ENCODE measurements at regions of chr5 and their contacts with region 1.

Region 1: DNA sequence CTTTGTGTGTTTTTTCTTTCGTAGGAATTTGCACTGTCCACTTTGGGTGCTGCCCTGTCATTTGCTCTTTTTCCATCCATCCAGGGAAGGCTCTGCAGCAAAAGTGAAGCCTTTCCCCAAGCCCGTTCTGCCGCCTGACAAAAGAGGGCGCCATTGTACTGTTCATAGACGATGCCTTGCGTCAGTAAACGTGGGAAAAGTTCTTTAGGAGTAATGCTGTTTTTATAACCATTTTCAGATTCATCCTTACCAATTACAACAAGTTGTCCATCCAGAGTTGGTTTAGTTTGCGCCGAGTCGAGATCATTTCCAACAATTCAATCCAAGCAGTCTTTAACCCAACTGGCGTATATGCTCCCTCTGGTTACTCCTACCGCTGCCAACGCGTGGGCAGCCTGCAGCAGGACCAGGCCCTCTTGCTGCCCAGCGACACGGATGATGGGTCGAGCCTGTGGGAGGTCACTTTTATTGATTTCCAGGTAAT is 34.3 kb upstream of the RPS23 start:
- DNase-seq: peak; percentile 50
- ATAC-seq: peak; percentile 84
- H3K4me3 ChIP-seq: no peak overlapping the region
- H3K27ac ChIP-seq: no peak overlapping the region
- H3K4me1 ChIP-seq: no peaks in the 10 kb centered on the region
- H3K27me3 ChIP-seq: no peaks in the 10 kb centered on the region
- CTCF ChIP-seq: peak; percentile 85
- EP300 ChIP-seq: no peak
- POLR2A ChIP-seq: no peak
- RAD21 ChIP-seq: peak; percentile 63

Region 2: DNA sequence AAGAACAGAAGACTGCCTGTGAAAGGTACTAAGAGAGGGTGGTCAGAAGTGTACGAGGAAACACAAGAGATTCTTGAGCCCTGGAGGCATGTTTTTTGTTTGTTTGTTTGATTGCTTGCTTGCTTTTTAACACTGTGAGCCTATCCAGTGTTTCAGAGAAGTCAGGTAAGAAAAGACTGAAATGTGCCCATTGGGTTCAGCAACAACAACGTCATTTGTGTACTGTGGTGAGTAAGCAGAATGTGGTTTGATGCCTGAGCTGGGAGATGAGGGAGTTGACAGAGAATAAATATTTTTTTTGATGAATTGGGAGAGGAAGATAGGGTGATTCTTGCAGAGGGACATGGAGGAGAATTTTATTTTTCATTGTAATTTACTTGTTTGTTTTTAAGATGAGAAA is 107.4 kb before region 1 on chr5:
- CTCF ChIA-PET with region 1: no interaction called
- POLR2A ChIA-PET with region 1: no interaction called
- in situ Hi-C with region 1: no loop called
- intact Hi-C with region 1: no loop called
- DNase-seq: no peak
- ATAC-seq: no peak
- H3K4me3 ChIP-seq: no peak overlapping the region
- H3K27ac ChIP-seq: no peak overlapping the region
- H3K4me1 ChIP-seq: no peaks in the 10 kb centered on the region
- H3K27me3 ChIP-seq: no peaks in the 10 kb centered on the region
- CTCF ChIP-seq: no peak
- EP300 ChIP-seq: no peak
- POLR2A ChIP-seq: no peak
- RAD21 ChIP-seq: no peak

Region 3: GRCh38 chr5:82793808-82794419 is 481.5 kb after region 1 on chr5:
- CTCF ChIA-PET with region 1: interaction called, 3 read pairs
- POLR2A ChIA-PET with region 1: no interaction called
- in situ Hi-C with region 1: no loop called
- intact Hi-C with region 1: loop called (anchors 1 kb)
- DNase-seq: peak; percentile 21
- ATAC-seq: no peak
- H3K4me3 ChIP-seq: no peak overlapping the region
- H3K27ac ChIP-seq: no peak overlapping the region
- H3K4me1 ChIP-seq: no peaks in the 10 kb centered on the region
- H3K27me3 ChIP-seq: no peaks in the 10 kb centered on the region
- CTCF ChIP-seq: peak; percentile 60
- EP300 ChIP-seq: no peak
- POLR2A ChIP-seq: no peak
- RAD21 ChIP-seq: no peak

Region 4: DNA sequence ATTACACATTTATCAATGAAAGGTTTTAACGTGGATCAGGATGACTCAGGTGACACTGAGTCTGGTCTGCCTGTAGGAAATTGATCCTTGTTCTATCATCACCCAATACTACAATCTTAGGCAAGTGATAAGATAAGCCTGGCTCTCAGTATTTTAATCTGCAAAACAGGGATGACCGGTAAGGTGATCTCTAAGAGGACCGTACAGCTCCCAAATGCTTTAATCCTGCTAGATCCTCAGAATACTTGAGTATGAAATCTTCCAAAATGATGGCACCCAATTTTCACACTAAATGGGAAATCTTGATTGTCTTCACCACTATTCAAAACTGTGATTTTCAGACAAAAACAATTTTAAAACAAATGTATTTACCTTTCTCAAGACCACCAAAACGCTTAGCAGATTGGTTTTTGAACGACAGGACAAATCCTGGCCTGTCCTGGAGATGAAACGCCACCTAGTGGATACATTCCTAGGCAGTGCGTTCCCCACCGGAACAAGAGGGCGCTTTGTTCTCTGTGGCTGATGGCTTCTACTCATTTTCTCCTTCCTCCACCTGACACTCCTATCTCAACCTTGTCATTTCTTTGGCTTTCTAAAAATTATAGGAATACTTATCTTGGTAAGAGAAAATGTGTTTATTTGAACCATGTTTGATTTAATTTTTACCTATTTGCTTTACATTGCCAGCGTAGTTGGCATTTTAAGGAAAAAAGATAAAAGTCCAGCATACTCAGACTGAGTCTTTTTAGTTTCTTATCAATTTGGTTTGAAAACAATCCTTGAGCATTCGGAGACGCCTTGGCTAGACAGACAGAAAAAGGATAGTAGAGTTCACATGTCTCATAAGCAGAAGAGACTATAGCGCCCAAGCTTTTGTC is 1118.0 kb after region 1 on chr5:
- CTCF ChIA-PET with region 1: interaction called, 6 read pairs
- POLR2A ChIA-PET with region 1: no interaction called
- in situ Hi-C with region 1: loop called (anchors 10 kb)
- intact Hi-C with region 1: loop called (anchors 1 kb)
- DNase-seq: peak; percentile 61
- ATAC-seq: peak; percentile 99
- H3K4me3 ChIP-seq: no peak overlapping the region
- H3K27ac ChIP-seq: no peak overlapping the region
- H3K4me1 ChIP-seq: no peaks in the 10 kb centered on the region
- H3K27me3 ChIP-seq: no peaks in the 10 kb centered on the region
- CTCF ChIP-seq: peak; percentile 90
- EP300 ChIP-seq: no peak
- POLR2A ChIP-seq: no peak
- RAD21 ChIP-seq: peak; percentile 66

Region 5: DNA sequence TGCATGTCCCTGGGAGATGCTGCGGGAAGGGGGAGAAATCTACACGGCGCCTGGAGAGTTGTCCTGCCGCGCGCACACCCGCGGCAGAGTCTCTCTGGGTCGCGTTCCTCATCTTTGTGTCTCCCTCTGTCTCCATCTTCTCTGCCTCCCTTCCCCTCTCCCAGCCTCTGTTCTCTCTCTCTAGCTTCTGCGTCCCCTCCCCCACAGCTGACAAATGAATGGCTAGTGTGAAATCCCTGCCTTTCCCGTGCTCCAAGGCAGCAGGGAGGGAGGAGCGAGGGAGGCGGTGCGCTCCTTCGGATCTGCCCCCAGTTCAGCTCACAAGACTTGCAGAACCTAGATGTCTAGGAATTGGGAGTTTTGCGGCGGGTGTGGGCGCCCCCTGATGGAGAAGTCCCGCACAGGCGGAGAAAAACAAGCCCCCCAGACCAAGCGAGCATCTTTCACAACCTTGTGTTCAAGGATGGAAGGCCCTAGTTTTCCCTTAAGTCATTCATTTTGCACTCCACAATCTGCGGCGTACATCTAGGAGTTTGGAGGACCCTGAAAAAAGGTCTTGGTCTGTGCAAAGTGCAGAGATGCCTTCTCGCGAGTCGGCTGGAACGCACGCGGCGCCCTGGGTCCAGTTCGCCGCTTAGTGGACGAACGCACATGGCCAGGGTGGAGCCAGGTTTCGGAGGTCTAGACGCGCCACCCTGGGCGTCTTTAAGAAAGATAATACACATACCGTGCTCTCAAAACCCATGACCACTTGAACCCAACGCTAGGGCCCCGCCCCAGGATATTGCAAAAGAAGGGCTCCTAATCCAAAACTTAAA is 1161.1 kb after region 1 on chr5:
- CTCF ChIA-PET with region 1: no interaction called
- POLR2A ChIA-PET with region 1: no interaction called
- in situ Hi-C with region 1: no loop called
- intact Hi-C with region 1: loop called (anchors 5 kb)
- DNase-seq: no peak
- ATAC-seq: peak; percentile 67
- H3K4me3 ChIP-seq: peak overlapping the region; percentile 36 to 68 (median 46); a peak in 5 of 6 replicates
- H3K27ac ChIP-seq: no peak overlapping the region
- H3K4me1 ChIP-seq: peaks cover 71% of the 10 kb centered on the region
- H3K27me3 ChIP-seq: peaks cover 3 to 43% of the 10 kb centered on the region in 2 experiments; a peak in 4 of 5 replicates
- CTCF ChIP-seq: peak; percentile 80
- EP300 ChIP-seq: no peak
- POLR2A ChIP-seq: no peak
- RAD21 ChIP-seq: peak; percentile 57; the same call in 1 of the 2 replicates

Measured in HepG2 (cell line).